Dorsolateral prefrontal cortex (tissue), 120 donors: ENCODE measurements at regions of chr14 and their contacts with region 1.

Region 1: GRCh38 chr14:32366256-32366879 is 37.3 kb downstream of the AKAP6 start:
- DNase-seq: peak in 9 of 10 donors; percentile 22 to 74 (median 60)
- H3K4me3 ChIP-seq: peak overlapping the region in 20 of 59 donors; percentile 0 to 44 (median 14)
- H3K27ac ChIP-seq: peak overlapping the region; percentile 54 to 96 (median 88)
- H3K27me3 ChIP-seq: no peaks in the 10 kb centered on the region
- CTCF ChIP-seq: peak in 50 of 56 donors; percentile 13 to 75 (median 53)

Region 2: GRCh38 chr14:30638926-30639325 is 1727.4 kb before region 1 on chr14:
- intact Hi-C with region 1: no loop called
- DNase-seq: no peak
- H3K4me3 ChIP-seq: no peak overlapping the region
- H3K27ac ChIP-seq: no peak overlapping the region
- H3K27me3 ChIP-seq: no peaks in the 10 kb centered on the region
- CTCF ChIP-seq: no peak

Region 3: GRCh38 chr14:32331206-32331605 is 35.2 kb before region 1 on chr14:
- intact Hi-C with region 1: loop called in 1 of 2 experiments (anchors 5 kb)
- DNase-seq: peak in 2 of 10 donors; percentile 31 to 46
- H3K4me3 ChIP-seq: peak overlapping the region; percentile 40 to 83 (median 69)
- H3K27ac ChIP-seq: peak overlapping the region in 58 of 59 donors; percentile 36 to 95 (median 88)
- H3K27me3 ChIP-seq: no peaks in the 10 kb centered on the region
- CTCF ChIP-seq: peak in 1 of 56 donors; percentile 12

Region 4: DNA sequence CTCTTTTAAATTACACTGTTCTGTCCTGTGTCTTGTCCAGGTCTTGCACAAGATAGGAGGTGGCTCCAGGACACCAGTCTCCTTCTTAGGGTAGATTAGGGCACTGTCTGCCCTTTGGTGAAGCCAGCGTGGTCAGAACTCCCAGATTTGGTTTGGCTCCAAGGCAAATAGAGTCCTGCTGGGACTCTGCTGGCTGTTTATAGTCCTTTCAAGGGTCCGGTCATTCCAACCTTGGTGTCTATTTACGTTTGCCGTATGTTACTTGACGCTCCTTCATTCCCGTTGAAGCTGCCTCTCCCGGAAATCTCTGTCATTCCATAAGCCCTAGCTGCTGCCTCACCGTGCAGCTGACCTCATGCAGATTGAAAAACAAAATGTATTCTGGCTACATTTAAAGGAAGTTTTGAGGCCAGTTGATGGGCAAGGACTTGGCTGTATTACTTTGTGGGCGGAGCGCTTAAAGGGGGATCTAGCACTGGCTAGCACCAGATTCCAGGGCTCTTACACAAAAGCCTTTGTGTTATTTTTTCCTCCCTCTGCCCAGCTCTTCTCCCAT is 143.3 kb after region 1 on chr14:
- intact Hi-C with region 1: loop called in 1 of 2 experiments (anchors 5 kb)
- DNase-seq: peak; percentile 23 to 91 (median 85)
- H3K4me3 ChIP-seq: peak overlapping the region in 49 of 59 donors; percentile 5 to 61 (median 37)
- H3K27ac ChIP-seq: peak overlapping the region; percentile 80 to 100 (median 99)
- H3K27me3 ChIP-seq: no peaks in the 10 kb centered on the region
- CTCF ChIP-seq: peak in 14 of 56 donors; percentile 4 to 38 (median 16)

Region 5: GRCh38 chr14:32757568-32757967 is 391.2 kb after region 1 on chr14:
- intact Hi-C with region 1: no loop called
- DNase-seq: peak in 1 of 10 donors; percentile 22
- H3K4me3 ChIP-seq: no peak overlapping the region
- H3K27ac ChIP-seq: peak overlapping the region in 5 of 59 donors; percentile 1 to 58 (median 22)
- H3K27me3 ChIP-seq: no peaks in the 10 kb centered on the region
- CTCF ChIP-seq: no peak